Activated CD4-positive, alpha-beta memory T cell treated with anti-CD3 and anti-CD28 coated beads, Interleukin-2, amount 10 ng/mL, durations not matched to agents 7 days and 5 days (primary cell): ENCODE measurements at regions of chr9 and their contacts with region 1.

Region 1: DNA sequence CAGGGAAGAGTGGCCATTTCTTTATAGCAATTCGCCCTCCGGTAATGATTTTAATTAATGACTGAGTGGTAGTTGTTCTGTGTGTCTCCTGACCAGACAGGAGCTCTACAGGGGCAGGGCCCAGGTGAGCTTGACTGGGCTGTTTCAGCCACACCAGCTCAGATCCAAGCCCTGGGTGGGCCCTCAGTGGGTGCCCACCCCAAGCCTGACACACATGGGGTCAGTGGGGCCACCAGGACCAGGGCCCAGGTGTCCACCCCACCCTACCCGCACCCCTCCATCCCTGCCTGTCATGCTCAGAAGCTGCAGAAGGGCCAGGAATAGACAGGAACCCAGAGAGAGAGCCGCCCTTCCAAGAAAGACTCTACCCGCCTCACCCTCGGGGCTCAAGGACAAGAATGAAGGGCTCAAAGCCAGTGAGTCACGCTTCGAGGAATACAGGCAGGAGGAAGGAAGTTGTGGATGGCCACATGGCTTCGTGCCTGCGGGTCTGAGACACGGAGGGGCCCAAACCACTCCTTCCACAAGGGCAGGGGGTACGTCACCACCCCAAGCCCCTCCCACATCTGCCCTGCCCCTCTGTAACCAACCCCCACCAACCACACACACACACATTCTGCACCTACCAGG is 56.2 kb upstream of the STXBP1 start:
- DNase-seq: peak; percentile 91
- H3K4me3 Mint-ChIP-seq: peak overlapping the region; percentile 67
- H3K27ac Mint-ChIP-seq: peak overlapping the region; percentile 81
- H3K4me1 Mint-ChIP-seq: peaks cover 87% of the 10 kb centered on the region
- H3K27me3 Mint-ChIP-seq: no peaks in the 10 kb centered on the region

Region 2: GRCh38 chr9:127525401-127526187 is 30.3 kb before region 1 on chr9:
- CTCF ChIA-PET with region 1: interaction called, 21 read pairs
- POLR2A ChIA-PET with region 1: interaction called, 7 read pairs
- DNase-seq: peak; percentile 40
- H3K4me3 Mint-ChIP-seq: no peak overlapping the region
- H3K27ac Mint-ChIP-seq: no peak overlapping the region
- H3K4me1 Mint-ChIP-seq: peaks cover 5% of the 10 kb centered on the region
- H3K27me3 Mint-ChIP-seq: no peaks in the 10 kb centered on the region

Region 3: GRCh38 chr9:127568971-127569885 is 13.3 kb after region 1 on chr9:
- CTCF ChIA-PET with region 1: interaction called, 5 read pairs
- POLR2A ChIA-PET with region 1: interaction called, 60 read pairs
- DNase-seq: peak; percentile 87
- H3K4me3 Mint-ChIP-seq: peak overlapping the region; percentile 87
- H3K27ac Mint-ChIP-seq: peak overlapping the region; percentile 96
- H3K4me1 Mint-ChIP-seq: peaks cover 75% of the 10 kb centered on the region
- H3K27me3 Mint-ChIP-seq: no peaks in the 10 kb centered on the region

Region 4: DNA sequence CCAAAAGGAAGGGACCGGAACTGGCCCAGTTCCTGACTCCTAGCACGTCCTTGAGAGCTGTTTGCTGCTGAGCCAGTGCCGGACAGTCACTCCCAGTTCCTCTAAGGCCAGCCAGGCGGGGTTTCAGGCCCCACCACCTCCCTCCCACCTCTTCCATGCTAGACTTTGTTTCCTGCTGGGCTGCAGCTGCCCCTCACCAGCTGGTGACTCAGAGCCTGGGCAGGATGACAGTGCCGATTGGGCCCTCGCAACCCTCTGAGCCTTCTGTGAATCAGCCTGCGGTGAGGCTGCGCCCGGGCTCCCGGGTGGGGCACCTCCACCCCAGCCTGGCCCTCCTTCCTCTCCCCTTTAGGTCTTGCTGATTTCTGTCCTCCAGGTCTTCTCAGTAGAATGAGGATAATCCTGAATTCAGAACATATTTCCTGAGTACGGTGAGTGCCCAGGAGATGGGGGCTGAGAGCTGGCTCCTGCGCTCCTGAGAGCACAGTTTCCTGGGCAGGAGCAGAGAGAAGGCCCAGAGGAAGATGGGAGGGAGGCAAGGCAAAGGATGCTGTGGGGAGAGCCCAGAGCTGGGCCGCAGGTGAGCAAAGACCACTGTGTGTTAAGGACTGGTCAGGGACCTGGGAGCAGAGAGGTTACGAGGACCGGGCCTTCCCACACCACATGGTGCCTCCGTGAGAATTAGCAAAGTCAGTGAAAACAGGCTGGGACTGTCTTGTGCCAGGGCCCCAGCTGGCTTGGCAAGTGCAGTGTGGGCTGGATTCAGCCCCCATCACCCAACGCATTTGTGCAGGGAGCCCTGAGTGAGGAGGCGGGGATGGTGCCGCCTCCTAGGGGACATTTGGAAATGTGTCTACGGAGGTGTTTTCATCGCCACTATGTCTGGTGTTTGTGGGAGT is 23.3 kb after region 1 on chr9:
- CTCF ChIA-PET with region 1: interaction called, 10 read pairs
- POLR2A ChIA-PET with region 1: interaction called, 65 read pairs
- DNase-seq: peak; percentile 88
- H3K4me3 Mint-ChIP-seq: peak overlapping the region; percentile 82
- H3K27ac Mint-ChIP-seq: peak overlapping the region; percentile 92
- H3K4me1 Mint-ChIP-seq: peaks cover 65% of the 10 kb centered on the region
- H3K27me3 Mint-ChIP-seq: no peaks in the 10 kb centered on the region